ENCODE measurements at regions of chr3 and their contacts with region 1.

Region 1: DNA sequence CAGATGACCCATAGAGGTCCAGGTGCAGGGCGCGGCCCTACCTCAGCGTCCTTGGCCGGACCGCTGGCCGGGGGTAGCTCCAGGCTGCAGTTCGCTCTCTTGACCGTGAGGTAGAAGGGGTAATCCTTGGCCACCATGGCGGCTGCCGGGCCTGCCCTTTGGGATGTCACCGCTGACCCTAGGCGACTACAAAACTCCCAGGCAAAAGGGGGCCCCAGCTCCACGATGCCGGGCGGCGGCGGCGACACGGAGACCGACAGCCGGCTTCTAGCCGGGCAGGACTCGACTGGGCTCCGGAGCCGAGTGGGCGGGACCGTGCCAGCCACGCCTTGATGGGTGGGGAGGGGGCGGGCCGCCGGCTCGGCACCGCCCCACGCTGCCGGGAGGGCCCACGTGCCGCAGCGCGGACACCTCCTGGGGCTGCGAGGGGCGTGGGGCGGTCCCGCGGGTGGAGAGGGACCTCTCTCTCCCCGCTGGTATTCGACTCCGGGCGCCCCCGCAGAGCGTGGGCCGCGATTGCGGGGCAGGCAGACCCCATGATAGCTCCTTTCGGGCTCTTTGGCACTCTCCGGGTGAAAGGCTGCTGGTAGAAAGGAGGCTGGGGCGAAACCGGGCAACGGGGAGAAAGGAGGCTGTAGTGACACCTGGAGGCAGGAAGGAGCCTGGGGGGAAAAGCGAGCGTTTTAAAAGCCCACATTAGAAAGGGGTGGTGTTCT is at the start of gene ARHGEF3:
- DNase-seq: no peak
- ATAC-seq: peak; percentile 91
- H3K4me3 ChIP-seq: peak within 1 kb of the TSS; percentile 71
- H3K27ac ChIP-seq: peak within 1 kb of the TSS; percentile 54
- H3K4me1 ChIP-seq: peaks cover 6% of the 10 kb centered on the region
- H3K27me3 ChIP-seq: no peaks in the 10 kb centered on the region
- CTCF ChIP-seq: peak; percentile 70 to 81 (median 75)
- EP300 ChIP-seq: no peak
- POLR2A ChIP-seq: peak; percentile 77
- RAD21 ChIP-seq: peak; percentile 67
- polyA plus RNA-seq, gene ARHGEF3: 21.8 to 31.1 TPM

Region 2: GRCh38 chr3:56702490-56703315 is 99.1 kb before region 1 on chr3:
- CTCF ChIA-PET with region 1: interaction called, 429 read pairs
- POLR2A ChIA-PET with region 1: interaction called, 74 read pairs
- RAD21 ChIA-PET with region 1: interaction called, 388 read pairs
- SMC1A ChIA-PET with region 1: interaction called, 411 read pairs
- in situ Hi-C with region 1: no loop called
- intact Hi-C with region 1: loop called (anchors 1 kb)
- DNase-seq: no peak
- ATAC-seq: peak; percentile 85
- H3K4me3 ChIP-seq: no peak overlapping the region
- H3K27ac ChIP-seq: no peak overlapping the region
- H3K4me1 ChIP-seq: peaks cover 10% of the 10 kb centered on the region; the same call in 1 of the 2 replicates
- H3K27me3 ChIP-seq: no peaks in the 10 kb centered on the region
- CTCF ChIP-seq: peak; percentile 66 to 83 (median 70)
- EP300 ChIP-seq: no peak
- POLR2A ChIP-seq: no peak
- RAD21 ChIP-seq: peak; percentile 99

Region 3: GRCh38 chr3:56753206-56753820 is 48.5 kb before region 1 on chr3:
- CTCF ChIA-PET with region 1: interaction called, 244 read pairs
- POLR2A ChIA-PET with region 1: interaction called, 86 read pairs
- RAD21 ChIA-PET with region 1: interaction called, 307 read pairs
- SMC1A ChIA-PET with region 1: interaction called, 383 read pairs
- in situ Hi-C with region 1: no loop called
- intact Hi-C with region 1: loop called (anchors 2 kb)
- DNase-seq: peak; percentile 87
- ATAC-seq: peak; percentile 96
- H3K4me3 ChIP-seq: peak overlapping the region; percentile 43; the same call in 1 of the 2 replicates
- H3K27ac ChIP-seq: peak overlapping the region; percentile 70
- H3K4me1 ChIP-seq: peaks cover 48% of the 10 kb centered on the region
- H3K27me3 ChIP-seq: no peaks in the 10 kb centered on the region
- CTCF ChIP-seq: no peak; a peak in 1 of 6 replicates
- EP300 ChIP-seq: peak; percentile 68 to 79; a peak in 3 of 4 replicates
- POLR2A ChIP-seq: no peak
- RAD21 ChIP-seq: 0 out of 2 replicates have a peak, but pooled peaks have one; percentile 7

Region 4: GRCh38 chr3:56812754-56813650 is 11.2 kb after region 1 on chr3:
- CTCF ChIA-PET with region 1: interaction called, 41 read pairs
- POLR2A ChIA-PET with region 1: interaction called, 5 read pairs
- RAD21 ChIA-PET with region 1: interaction called, 15 read pairs
- SMC1A ChIA-PET with region 1: interaction called, 12 read pairs
- in situ Hi-C with region 1: no loop called
- intact Hi-C with region 1: no loop called
- DNase-seq: no peak
- ATAC-seq: no peak
- H3K4me3 ChIP-seq: no peak overlapping the region
- H3K27ac ChIP-seq: no peak overlapping the region
- H3K4me1 ChIP-seq: no peaks in the 10 kb centered on the region
- H3K27me3 ChIP-seq: 0 out of 4 replicates have a peak, but pooled peaks cover 0 to 2% of the 10 kb centered on the region in 2 experiments
- CTCF ChIP-seq: no peak
- EP300 ChIP-seq: no peak
- POLR2A ChIP-seq: no peak
- RAD21 ChIP-seq: no peak

Region 5: DNA sequence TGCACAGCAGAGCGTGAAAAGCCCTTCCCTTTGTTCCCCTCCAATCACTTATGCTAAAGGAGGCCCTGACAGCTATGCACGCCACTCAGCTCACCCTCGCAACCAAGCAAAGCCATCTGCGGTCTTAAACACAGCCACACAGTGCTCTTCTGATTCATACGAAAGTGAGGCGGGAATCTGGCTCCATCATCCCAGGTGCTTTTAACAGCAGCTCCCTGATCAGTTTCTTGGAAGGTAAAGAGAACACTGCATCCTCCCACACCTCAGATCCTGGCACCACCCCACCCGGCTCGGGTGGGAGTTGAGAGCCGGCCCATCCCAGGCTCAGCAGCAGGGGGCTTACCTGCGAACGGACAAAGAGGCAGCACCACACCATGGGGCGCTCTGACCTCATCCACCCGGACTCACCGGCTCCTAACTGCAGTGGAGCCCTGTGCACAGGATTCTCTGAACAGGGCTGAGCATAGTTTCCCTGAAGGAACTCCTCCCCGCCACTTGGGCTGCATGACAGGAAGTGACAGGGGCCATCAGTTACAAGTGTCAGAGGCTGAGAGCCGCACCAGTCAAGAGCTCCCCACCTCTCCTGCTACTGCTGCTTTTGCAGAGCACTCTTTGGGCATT is 114.3 kb after region 1 on chr3:
- CTCF ChIA-PET with region 1: interaction called, 40 read pairs
- POLR2A ChIA-PET with region 1: interaction called, 6 read pairs
- RAD21 ChIA-PET with region 1: interaction called, 39 read pairs
- SMC1A ChIA-PET with region 1: interaction called, 39 read pairs
- in situ Hi-C with region 1: no loop called
- intact Hi-C with region 1: loop called (anchors 1 kb)
- DNase-seq: peak; percentile 32
- ATAC-seq: peak; percentile 72
- H3K4me3 ChIP-seq: peak overlapping the region; percentile 66
- H3K27ac ChIP-seq: peak overlapping the region; percentile 92
- H3K4me1 ChIP-seq: peaks cover 49% of the 10 kb centered on the region
- H3K27me3 ChIP-seq: no peaks in the 10 kb centered on the region
- CTCF ChIP-seq: no peak
- EP300 ChIP-seq: 0 out of 4 replicates have a peak, but pooled peaks of 1 of the 2 experiments have one; percentile 20
- POLR2A ChIP-seq: peak; percentile 56
- RAD21 ChIP-seq: no peak

Region 6: DNA sequence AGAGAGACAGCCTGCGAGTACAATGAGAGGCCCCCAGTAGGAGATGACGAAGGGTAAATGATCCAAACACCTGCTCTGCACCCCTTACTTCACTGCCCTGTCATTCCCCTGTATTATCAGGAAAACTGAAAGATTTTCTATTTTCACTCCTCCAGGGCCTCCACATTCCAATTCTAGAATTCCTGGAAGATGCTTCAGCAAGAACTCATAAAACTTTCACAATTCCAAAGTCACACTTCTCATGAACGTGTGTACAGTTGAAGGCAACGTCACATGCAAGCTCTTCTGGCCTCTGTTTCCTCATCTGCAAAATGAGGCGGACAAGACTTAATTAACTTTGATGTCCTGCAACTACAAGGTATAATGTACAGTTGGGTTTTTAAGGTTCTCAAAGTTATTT is 195.9 kb after region 1 on chr3:
- CTCF ChIA-PET with region 1: interaction called, 220 read pairs
- POLR2A ChIA-PET with region 1: no interaction called
- RAD21 ChIA-PET with region 1: interaction called, 206 read pairs
- SMC1A ChIA-PET with region 1: interaction called, 166 read pairs
- in situ Hi-C with region 1: no loop called
- intact Hi-C with region 1: no loop called
- DNase-seq: no peak
- ATAC-seq: no peak
- H3K4me3 ChIP-seq: no peak overlapping the region
- H3K27ac ChIP-seq: no peak overlapping the region
- H3K4me1 ChIP-seq: no peaks in the 10 kb centered on the region; the same call in 1 of the 2 replicates
- H3K27me3 ChIP-seq: no peaks in the 10 kb centered on the region
- CTCF ChIP-seq: no peak
- EP300 ChIP-seq: no peak
- POLR2A ChIP-seq: no peak
- RAD21 ChIP-seq: no peak

Measured in GM12878 (cell line).